ENCODE measurements at regions of chr6 and their contacts with region 1.

Region 1: GRCh38 chr6:123715006-123715875 is 78.5 kb upstream of the TRDN start:
- DNase-seq: no peak
- H3K4me3 ChIP-seq: no peak overlapping the region
- H3K27ac ChIP-seq: no peak overlapping the region
- H3K4me1 ChIP-seq: no peaks in the 10 kb centered on the region
- H3K27me3 ChIP-seq: no peaks in the 10 kb centered on the region
- CTCF ChIP-seq: peak in 1 of 3 donors; percentile 20
- EP300 ChIP-seq: no peak
- POLR2A ChIP-seq: no peak

Region 2: GRCh38 chr6:122696079-122696478 is 1019.2 kb before region 1 on chr6:
- intact Hi-C with region 1: no loop called
- DNase-seq: no peak
- H3K4me3 ChIP-seq: no peak overlapping the region
- H3K27ac ChIP-seq: no peak overlapping the region
- H3K4me1 ChIP-seq: no peaks in the 10 kb centered on the region
- H3K27me3 ChIP-seq: no peaks in the 10 kb centered on the region
- CTCF ChIP-seq: no peak
- EP300 ChIP-seq: no peak
- POLR2A ChIP-seq: no peak

Region 3: DNA sequence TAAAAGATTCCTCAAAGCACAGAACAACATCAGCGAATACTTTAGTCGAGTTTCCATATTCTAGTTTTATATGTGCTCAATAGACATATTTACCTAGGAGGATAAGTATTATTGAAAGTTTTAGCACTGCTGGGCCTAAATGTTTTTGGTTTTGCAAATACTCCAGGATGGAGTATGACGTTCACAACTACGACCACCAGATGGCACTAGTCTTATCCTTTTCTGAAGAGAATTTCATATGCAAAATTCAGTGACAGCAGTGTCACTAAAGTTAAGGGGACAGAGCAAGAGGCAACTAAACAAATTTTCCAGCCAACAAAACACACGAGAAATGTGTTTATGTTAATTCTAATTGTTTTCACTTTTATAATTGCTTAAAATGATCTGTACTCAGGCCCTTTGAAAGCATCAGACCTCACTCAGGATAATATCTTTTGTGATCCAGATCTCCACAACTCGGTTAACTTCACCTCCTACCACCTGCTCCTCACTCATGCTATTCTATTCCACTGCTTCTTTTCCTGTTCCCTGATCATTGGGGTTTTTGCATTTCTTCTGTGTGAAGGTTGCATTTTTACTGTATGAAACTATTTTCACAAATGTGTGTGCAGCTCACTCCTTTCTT is 299.3 kb before region 1 on chr6:
- intact Hi-C with region 1: loop called (anchors 5 to 10 kb)
- DNase-seq: peak in 2 of 5 donors; percentile 11 to 39
- H3K4me3 ChIP-seq: no peak overlapping the region
- H3K27ac ChIP-seq: no peak overlapping the region
- H3K4me1 ChIP-seq: no peaks in the 10 kb centered on the region
- H3K27me3 ChIP-seq: no peaks in the 10 kb centered on the region
- CTCF ChIP-seq: peak in 2 of 3 donors; percentile 25 to 32
- EP300 ChIP-seq: no peak
- POLR2A ChIP-seq: no peak